Dorsolateral prefrontal cortex (tissue), 120 donors: ENCODE measurements at regions of chr5 and their contacts with region 1.

Region 1: GRCh38 chr5:137901011-137901817 is 12.0 kb downstream of the PKD2L2 start:
- DNase-seq: no peak
- H3K4me3 ChIP-seq: peak overlapping the region in 30 of 59 donors; percentile 0 to 53 (median 16)
- H3K27ac ChIP-seq: peak overlapping the region; percentile 31 to 99 (median 94)
- H3K27me3 ChIP-seq: no peaks in the 10 kb centered on the region
- CTCF ChIP-seq: peak in 2 of 56 donors; percentile 7 to 18

Region 2: DNA sequence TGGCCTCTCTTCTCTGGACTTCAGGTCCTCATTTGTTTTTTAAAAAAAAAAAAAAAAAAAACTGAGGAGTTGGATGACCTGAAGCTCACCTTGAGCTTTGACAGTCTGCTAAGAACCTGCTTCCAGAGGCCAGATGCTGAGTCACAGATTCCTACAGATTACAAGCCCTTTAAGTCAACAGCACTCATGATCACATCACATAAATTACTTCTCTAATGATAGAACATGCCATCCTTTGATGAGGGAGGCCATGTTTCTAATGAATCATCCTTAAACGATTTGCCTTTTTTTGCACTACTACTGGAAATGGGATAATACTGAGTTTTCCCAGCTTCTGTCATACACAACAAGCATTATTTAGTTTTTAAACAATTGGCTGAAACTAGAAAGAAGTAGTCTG is 67.8 kb before region 1 on chr5:
- intact Hi-C with region 1: no loop called
- DNase-seq: no peak
- H3K4me3 ChIP-seq: no peak overlapping the region
- H3K27ac ChIP-seq: peak overlapping the region in 24 of 59 donors; percentile 10 to 90 (median 50)
- H3K27me3 ChIP-seq: no peaks in the 10 kb centered on the region
- CTCF ChIP-seq: no peak

Region 3: DNA sequence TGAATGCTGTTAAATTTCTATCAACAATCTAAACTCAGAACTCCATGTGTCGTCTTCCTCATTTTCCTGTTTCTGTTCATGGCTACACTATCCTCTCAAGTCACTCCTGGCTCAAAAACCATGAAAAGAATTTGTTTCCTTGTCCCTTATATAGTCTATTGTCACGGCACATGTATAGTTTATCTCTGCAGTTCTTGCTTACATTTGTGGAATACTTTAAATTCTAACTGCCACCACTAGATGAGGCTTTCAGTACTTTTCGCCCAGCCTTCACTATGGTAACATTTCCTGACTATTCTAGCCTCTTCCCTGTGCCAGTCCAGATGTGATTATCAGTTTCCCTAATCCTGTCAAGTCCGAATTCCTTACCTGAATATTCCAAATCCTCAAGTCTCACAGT is 22.6 kb after region 1 on chr5:
- intact Hi-C with region 1: loop called in 1 of 2 experiments (anchors 1 kb)
- DNase-seq: no peak
- H3K4me3 ChIP-seq: peak overlapping the region in 2 of 59 donors; percentile 9 to 11
- H3K27ac ChIP-seq: peak overlapping the region in 25 of 59 donors; percentile 1 to 70 (median 44)
- H3K27me3 ChIP-seq: no peaks in the 10 kb centered on the region
- CTCF ChIP-seq: peak in 47 of 56 donors; percentile 18 to 68 (median 36)

Region 4: GRCh38 chr5:138054847-138055558 is 153.8 kb after region 1 on chr5:
- intact Hi-C with region 1: no loop called
- DNase-seq: peak in 9 of 10 donors; percentile 39 to 80 (median 60)
- H3K4me3 ChIP-seq: peak overlapping the region; percentile 34 to 75 (median 59)
- H3K27ac ChIP-seq: peak overlapping the region; percentile 66 to 96 (median 90)
- H3K27me3 ChIP-seq: no peaks in the 10 kb centered on the region
- CTCF ChIP-seq: peak in 1 of 56 donors; percentile 11